ENCODE measurements at regions of chr1 and their contacts with region 1.

Region 1: GRCh38 chr1:204746838-204747442 is 61.4 kb upstream of the LRRN2 start:
- DNase-seq: no peak
- H3K4me3 ChIP-seq: no peak overlapping the region
- H3K27ac ChIP-seq: no peak overlapping the region
- H3K27me3 ChIP-seq: peaks cover 10% of the 10 kb centered on the region
- CTCF ChIP-seq: peak; percentile 97

Region 2: DNA sequence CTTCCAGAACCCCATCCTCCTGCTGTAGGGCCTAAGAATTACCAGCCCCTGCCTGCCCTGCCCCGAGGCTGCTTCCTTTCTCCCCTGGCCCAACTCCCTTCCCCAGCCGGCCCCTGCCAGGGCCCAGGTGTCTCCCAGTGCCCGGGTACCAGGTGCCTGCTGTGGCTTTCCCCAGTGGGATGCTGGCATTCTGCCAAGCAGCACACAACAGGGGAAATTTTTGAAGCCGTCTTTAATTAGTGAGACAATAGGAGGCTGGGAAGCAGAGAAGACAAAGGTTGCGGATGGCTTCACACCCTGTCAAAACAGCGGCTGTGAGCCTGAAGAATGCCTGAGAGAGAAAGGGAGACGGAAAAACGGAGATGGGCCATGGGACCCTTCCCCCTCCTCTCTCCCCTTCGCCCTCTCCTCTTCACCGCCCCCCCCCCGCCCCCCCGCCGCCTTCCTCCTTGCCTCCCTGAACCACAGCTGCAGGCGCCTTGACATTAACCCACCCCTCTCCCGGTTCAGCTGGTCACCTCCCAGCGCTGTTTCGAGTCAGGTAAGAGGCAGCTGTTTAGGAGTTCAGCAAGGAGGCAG is 95.0 kb before region 1 on chr1:
- CTCF ChIA-PET with region 1: no interaction called
- POLR2A ChIA-PET with region 1: no interaction called
- DNase-seq: no peak
- H3K4me3 ChIP-seq: no peak overlapping the region
- H3K27ac ChIP-seq: no peak overlapping the region
- H3K27me3 ChIP-seq: peaks cover 20% of the 10 kb centered on the region
- CTCF ChIP-seq: no peak

Region 3: GRCh38 chr1:204730826-204731459 is 16.0 kb before region 1 on chr1:
- CTCF ChIA-PET with region 1: interaction called, 10 read pairs
- POLR2A ChIA-PET with region 1: no interaction called
- DNase-seq: no peak
- H3K4me3 ChIP-seq: no peak overlapping the region
- H3K27ac ChIP-seq: no peak overlapping the region
- H3K27me3 ChIP-seq: peaks cover 15% of the 10 kb centered on the region
- CTCF ChIP-seq: no peak

Region 4: DNA sequence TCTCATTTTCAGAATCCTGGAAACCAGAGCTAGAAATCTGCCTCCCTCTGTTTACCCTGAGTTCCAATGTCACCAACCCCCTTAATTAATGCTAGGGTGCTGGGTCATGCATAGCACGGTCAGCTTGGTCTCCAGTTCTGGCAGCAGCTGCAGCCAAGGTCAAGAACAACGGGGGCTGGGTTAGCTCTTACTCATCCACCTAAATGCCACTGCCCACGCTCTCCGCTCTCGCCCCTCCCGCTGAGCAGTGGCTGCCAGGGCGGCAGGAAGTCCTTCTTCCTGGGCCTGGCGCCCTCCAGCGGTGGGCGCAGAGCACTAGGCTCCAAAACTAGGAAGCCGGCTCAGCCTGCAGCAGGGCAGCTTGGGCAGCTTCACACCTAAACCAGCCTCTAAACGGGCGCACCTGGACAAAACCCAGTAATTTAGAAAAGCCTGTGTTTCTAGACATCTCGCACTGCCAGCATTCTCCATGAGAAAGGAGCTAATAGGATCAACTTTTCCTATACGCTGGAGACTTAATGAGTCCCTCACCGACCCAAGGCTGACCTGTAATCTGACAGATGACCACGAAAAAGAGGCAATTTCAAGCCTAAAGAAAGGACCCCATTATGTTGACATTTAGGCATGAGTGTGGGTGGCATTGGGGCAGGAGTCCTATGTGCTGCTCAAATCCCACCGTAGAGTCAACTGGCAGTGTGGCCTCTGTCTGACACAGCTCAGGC is 16.9 kb after region 1 on chr1:
- CTCF ChIA-PET with region 1: interaction called, 16 read pairs
- POLR2A ChIA-PET with region 1: no interaction called
- DNase-seq: peak; percentile 23
- H3K4me3 ChIP-seq: no peak overlapping the region
- H3K27ac ChIP-seq: no peak overlapping the region
- H3K27me3 ChIP-seq: peaks cover 6% of the 10 kb centered on the region
- CTCF ChIP-seq: peak; percentile 69

Region 5: DNA sequence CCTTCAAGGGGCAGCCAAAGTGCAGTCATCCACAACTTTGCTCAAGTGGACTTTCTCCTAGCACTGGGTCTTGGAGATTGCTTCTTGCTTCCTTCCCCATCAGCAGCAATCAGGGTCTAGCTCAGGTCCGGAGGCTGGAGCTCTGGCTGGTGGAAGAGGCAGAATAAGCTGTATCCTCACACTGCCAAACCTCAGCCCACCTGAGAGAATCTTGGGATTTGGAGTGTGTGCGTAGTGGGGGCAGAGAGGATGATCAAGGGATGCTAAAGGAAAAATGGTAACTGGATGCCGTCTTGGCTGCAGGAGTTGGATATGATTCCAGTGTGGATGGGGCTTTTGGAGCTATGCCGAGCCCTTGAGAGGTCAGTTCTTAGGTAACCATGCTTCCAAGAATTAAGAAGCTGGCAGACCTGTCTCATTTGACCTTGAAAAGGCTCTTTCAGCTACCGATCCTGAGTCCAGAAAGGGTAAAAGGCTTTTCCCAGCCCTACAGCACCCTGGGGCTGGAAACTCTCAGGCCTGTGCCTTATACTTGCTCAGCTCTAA is 119.2 kb after region 1 on chr1:
- CTCF ChIA-PET with region 1: no interaction called
- POLR2A ChIA-PET with region 1: no interaction called
- DNase-seq: no peak
- H3K4me3 ChIP-seq: no peak overlapping the region
- H3K27ac ChIP-seq: no peak overlapping the region
- H3K27me3 ChIP-seq: no peaks in the 10 kb centered on the region
- CTCF ChIP-seq: no peak

Measured in AG04450 (cell line).